ENCODE measurements at regions of chr17 and their contacts with region 1.

Region 1: DNA sequence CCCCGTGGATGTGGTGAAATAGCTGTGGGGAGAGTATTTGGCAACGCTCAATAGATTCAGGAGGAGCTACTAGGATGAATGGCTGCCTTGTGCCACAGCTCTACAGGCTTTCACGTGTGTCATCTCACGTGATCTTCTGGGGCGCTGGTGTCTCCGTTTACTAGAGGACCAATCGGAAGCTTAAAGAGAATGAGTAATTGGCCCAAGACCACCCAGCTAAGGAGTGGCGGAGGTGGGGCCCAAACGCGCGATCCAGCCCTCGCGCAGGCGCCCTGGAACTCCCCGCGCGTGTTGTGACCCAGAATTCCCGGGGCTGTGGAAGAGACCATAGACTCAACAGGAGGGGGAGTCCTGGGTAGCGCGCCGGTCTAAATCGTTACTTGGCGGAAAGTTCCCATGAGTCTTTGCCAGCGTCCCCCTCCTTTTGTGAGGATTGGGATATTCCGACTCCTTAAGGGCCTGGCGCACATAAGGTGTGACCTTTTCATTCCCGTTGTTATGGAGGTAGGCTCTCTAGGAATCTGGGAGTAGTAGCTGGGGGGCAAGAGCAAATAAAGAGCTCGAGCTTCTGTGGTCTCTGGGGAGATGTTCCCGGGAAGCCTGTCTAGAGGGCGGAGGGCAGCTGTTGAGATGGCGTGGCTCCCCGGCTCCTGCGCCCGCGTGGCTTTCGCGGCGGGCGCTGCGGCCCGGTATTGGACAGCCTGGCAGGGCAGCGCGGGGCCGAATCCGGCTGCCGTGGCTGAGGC is 23.4 kb downstream of the TRPV2 start:
- DNase-seq: peak; percentile 81 to 97 (median 92)
- ATAC-seq: peak; percentile 85 to 88 (median 87)
- H3K4me3 ChIP-seq: peak overlapping the region; percentile 68 to 90
- H3K4me3 Mint-ChIP-seq: peak overlapping the region; percentile 97 to 100 (median 97)
- H3K27ac ChIP-seq: peak overlapping the region; percentile 82
- H3K27ac Mint-ChIP-seq: peak overlapping the region; percentile 97 to 98
- H3K4me1 ChIP-seq: peaks cover 19 to 41% of the 10 kb centered on the region in 2 experiments
- H3K4me1 Mint-ChIP-seq: peaks cover 44 to 55% (median 52%) of the 10 kb centered on the region in 3 donors
- H3K27me3 ChIP-seq: no peaks in the 10 kb centered on the region
- H3K27me3 Mint-ChIP-seq: no peaks in the 10 kb centered on the region

Region 2: GRCh38 chr17:16353317-16354174 is 85.2 kb before region 1 on chr17 and contains the start of gene CENPV:
- CTCF ChIA-PET with region 1: interaction called in 1 of 2 experiments, 4 read pairs
- POLR2A ChIA-PET with region 1: interaction called in 1 of 2 experiments, 12 read pairs
- DNase-seq: peak; percentile 21 to 84 (median 57)
- ATAC-seq: peak; percentile 84 to 92 (median 86)
- H3K4me3 ChIP-seq: peak within 1 kb of the TSS; percentile 63 to 80
- H3K4me3 Mint-ChIP-seq: peak within 1 kb of the TSS; percentile 89 to 91 (median 89)
- H3K27ac ChIP-seq: no peak within 1 kb of the TSS
- H3K27ac Mint-ChIP-seq: peak within 1 kb of the TSS; percentile 49 to 79
- H3K4me1 ChIP-seq: peaks cover 5 to 21% of the 10 kb centered on the region in 2 experiments
- H3K4me1 Mint-ChIP-seq: peaks cover 15 to 22% (median 19%) of the 10 kb centered on the region in 3 donors
- H3K27me3 ChIP-seq: peaks cover 0 to 6% of the 10 kb centered on the region in 2 experiments
- H3K27me3 Mint-ChIP-seq: no peaks in the 10 kb centered on the region
- total RNA-seq, gene CENPV: 12.7 to 20.0 (median 17.8) TPM

Region 3: GRCh38 chr17:16415031-16415924 is 23.5 kb before region 1 on chr17 and contains the start of gene TRPV2:
- CTCF ChIA-PET with region 1: interaction called in 1 of 2 experiments, 17 read pairs
- POLR2A ChIA-PET with region 1: interaction called in 1 of 2 experiments, 11 read pairs
- DNase-seq: peak in 34 of 35 experiments; percentile 24 to 69 (median 42)
- ATAC-seq: peak; percentile 48 to 75 (median 68)
- H3K4me3 ChIP-seq: peak within 1 kb of the TSS; percentile 86 to 92
- H3K4me3 Mint-ChIP-seq: peak within 1 kb of the TSS; percentile 90 to 98 (median 95)
- H3K27ac ChIP-seq: peak within 1 kb of the TSS; percentile 88
- H3K27ac Mint-ChIP-seq: peak within 1 kb of the TSS; percentile 99
- H3K4me1 ChIP-seq: peaks cover 8 to 60% of the 10 kb centered on the region in 2 experiments
- H3K4me1 Mint-ChIP-seq: peaks cover 45 to 52% (median 50%) of the 10 kb centered on the region in 3 donors
- H3K27me3 ChIP-seq: no peaks in the 10 kb centered on the region
- H3K27me3 Mint-ChIP-seq: no peaks in the 10 kb centered on the region
- total RNA-seq, gene TRPV2: 91.3 to 127 (median 122) TPM